AG04449 (cell line): ENCODE measurements at regions of chr7 and their contacts with region 1.

Region 1: DNA sequence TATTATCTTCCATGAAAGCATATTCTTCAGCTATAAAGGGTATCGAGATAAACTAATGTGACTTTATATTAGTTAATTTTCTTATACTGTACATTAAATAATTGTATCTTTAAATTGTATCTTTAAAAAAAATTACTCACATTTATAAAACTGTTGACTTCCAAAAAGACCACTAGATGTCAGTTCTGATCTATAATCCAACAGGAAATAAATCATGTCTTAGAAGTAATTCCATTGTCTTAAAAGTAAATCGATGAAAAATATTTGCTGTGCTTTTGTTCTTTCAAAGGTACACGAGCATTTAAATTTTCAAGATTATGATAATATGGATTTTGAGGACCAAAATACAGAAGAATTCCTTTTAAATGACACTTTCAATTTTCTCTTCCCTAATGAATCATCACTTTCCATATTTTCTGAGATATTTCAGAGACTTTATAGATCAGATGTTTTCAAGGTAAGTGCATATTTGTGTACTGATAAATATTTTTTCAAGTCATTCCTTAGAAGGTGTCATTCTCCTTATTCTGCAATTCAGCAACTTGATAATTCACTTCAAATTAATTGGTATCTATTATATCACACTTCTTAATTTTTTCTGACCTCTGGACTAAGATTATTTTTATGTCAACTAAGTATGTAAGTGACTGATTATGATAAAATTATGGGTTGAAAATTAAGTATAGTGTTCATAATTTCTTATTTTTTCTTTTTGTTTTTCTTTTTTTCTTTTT is 138.5 kb downstream of the CPED1 start:
- DNase-seq: no peak
- H3K4me3 ChIP-seq: no peak overlapping the region
- CTCF ChIP-seq: no peak

Region 2: GRCh38 chr7:121153995-121154394 is 27.0 kb after region 1 on chr7:
- CTCF ChIA-PET with region 1: no interaction called
- POLR2A ChIA-PET with region 1: no interaction called
- DNase-seq: peak; percentile 3
- H3K4me3 ChIP-seq: no peak overlapping the region
- CTCF ChIP-seq: no peak

Region 3: DNA sequence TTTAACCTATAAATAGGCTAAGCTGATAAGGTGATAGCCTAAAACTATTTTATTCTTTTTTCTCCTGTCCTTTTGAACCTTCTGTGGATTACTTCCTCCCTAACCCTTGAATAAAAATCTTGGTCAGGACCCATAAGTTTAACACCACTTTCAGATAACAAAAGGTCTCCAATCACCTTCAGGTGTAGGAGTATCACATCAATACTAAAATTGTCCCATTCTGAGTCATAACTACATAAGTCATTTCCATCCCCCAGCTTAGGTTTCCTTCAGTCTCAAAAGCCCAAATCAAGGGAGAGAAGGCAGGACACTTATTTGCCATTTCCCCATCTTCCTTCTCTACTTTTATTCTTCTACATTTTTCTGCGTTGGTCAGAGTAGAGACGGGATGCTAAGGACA is 144.9 kb after region 1 on chr7:
- CTCF ChIA-PET with region 1: no interaction called
- POLR2A ChIA-PET with region 1: no interaction called
- DNase-seq: no peak
- H3K4me3 ChIP-seq: no peak overlapping the region
- CTCF ChIP-seq: no peak

Region 4: DNA sequence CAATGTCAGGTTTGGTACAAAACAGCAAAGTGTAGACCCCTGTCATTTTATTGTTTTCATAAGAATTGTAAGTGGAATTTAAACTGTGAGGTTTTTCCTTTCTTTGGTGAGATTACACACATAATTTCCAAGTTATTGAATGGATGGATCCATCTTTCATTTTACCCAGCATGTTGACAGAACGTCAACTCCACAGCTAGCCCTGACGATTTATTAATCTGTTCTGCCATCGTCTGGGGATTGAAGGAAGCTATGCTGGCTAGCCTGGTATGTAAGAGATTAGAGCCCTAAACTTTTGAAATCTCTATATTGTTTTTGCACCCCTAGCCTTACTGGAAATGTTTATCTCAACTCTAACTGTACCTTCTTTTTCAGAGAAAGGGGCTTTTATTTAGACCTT is 210.4 kb after region 1 on chr7:
- CTCF ChIA-PET with region 1: interaction called, 13 read pairs
- POLR2A ChIA-PET with region 1: no interaction called
- DNase-seq: no peak
- H3K4me3 ChIP-seq: no peak overlapping the region
- CTCF ChIP-seq: peak; percentile 28